Activated CD4-positive, alpha-beta memory T cell treated with anti-CD3 and anti-CD28 coated beads for 36 hours (primary cell): ENCODE measurements at regions of chr14 and their contacts with region 1.

Region 1: GRCh38 chr14:22556990-22557623 is 31.9 kb downstream of the DAD1 start:
- DNase-seq: peak; percentile 94
- H3K4me3 Mint-ChIP-seq: peak overlapping the region; percentile 78
- H3K27ac Mint-ChIP-seq: peak overlapping the region; percentile 99
- H3K4me1 Mint-ChIP-seq: peaks cover 87% of the 10 kb centered on the region
- H3K27me3 Mint-ChIP-seq: peaks cover 4% of the 10 kb centered on the region

Region 2: DNA sequence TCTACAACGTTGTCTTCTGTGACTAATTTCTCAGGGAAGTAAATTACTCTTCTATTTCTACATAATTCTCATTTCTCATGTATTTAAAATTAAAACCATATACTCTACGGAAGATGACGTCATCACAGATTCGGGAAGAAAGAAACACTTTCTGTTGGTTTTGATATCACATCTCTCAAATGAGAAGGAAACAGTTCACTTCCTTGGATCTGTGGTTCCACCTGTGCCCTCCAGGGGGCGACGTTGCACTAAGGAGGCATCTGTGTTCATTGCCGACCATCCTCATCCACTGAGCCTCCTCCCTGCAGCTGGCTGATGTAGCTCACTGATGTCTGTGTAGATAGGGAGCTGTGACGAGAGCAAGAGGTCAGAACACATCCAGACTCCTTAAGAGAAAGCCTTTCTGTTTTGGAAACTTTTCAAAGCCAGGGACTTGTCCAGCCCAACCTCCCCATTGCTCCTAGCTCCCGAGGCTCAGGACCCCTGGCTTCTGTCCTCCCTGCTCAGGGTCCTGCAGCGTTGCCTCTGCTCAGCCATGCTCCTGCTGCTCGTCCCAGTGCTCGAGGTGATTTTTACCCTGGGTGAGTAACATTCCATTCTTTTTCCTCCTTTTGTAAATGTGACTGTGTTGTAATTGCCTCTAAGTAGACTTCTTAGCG is 710.8 kb before region 1 on chr14:
- CTCF ChIA-PET with region 1: interaction called, 3 read pairs
- POLR2A ChIA-PET with region 1: interaction called, 7 read pairs
- intact Hi-C with region 1: loop called (anchors 2 kb)
- DNase-seq: peak; percentile 88
- H3K4me3 Mint-ChIP-seq: peak overlapping the region; percentile 84
- H3K27ac Mint-ChIP-seq: peak overlapping the region; percentile 90
- H3K4me1 Mint-ChIP-seq: peaks cover 9% of the 10 kb centered on the region
- H3K27me3 Mint-ChIP-seq: peaks cover 14% of the 10 kb centered on the region

Region 3: GRCh38 chr14:22047115-22047514 is 510.0 kb before region 1 on chr14:
- CTCF ChIA-PET with region 1: no interaction called
- POLR2A ChIA-PET with region 1: no interaction called
- intact Hi-C with region 1: loop called (anchors 5 kb)
- DNase-seq: peak; percentile 35
- H3K4me3 Mint-ChIP-seq: peak overlapping the region; percentile 45
- H3K27ac Mint-ChIP-seq: peak overlapping the region; percentile 76
- H3K4me1 Mint-ChIP-seq: peaks cover 30% of the 10 kb centered on the region
- H3K27me3 Mint-ChIP-seq: no peaks in the 10 kb centered on the region

Region 4: GRCh38 chr14:22460461-22461195 is 96.5 kb before region 1 on chr14:
- CTCF ChIA-PET with region 1: no interaction called
- POLR2A ChIA-PET with region 1: no interaction called
- intact Hi-C with region 1: no loop called
- DNase-seq: no peak
- H3K4me3 Mint-ChIP-seq: no peak overlapping the region
- H3K27ac Mint-ChIP-seq: no peak overlapping the region
- H3K4me1 Mint-ChIP-seq: no peaks in the 10 kb centered on the region
- H3K27me3 Mint-ChIP-seq: no peaks in the 10 kb centered on the region

Region 5: GRCh38 chr14:22491683-22492621 is 65.2 kb before region 1 on chr14:
- CTCF ChIA-PET with region 1: interaction called, 3 read pairs
- POLR2A ChIA-PET with region 1: interaction called, 25 read pairs
- intact Hi-C with region 1: no loop called
- DNase-seq: peak; percentile 56
- H3K4me3 Mint-ChIP-seq: peak overlapping the region; percentile 87
- H3K27ac Mint-ChIP-seq: peak overlapping the region; percentile 98
- H3K4me1 Mint-ChIP-seq: peaks cover 2% of the 10 kb centered on the region
- H3K27me3 Mint-ChIP-seq: no peaks in the 10 kb centered on the region

Region 6: GRCh38 chr14:22531451-22532344 is 25.4 kb before region 1 on chr14:
- CTCF ChIA-PET with region 1: interaction called, 28 read pairs
- POLR2A ChIA-PET with region 1: interaction called, 268 read pairs
- intact Hi-C with region 1: no loop called
- DNase-seq: peak; percentile 66
- H3K4me3 Mint-ChIP-seq: peak overlapping the region; percentile 74
- H3K27ac Mint-ChIP-seq: peak overlapping the region; percentile 99
- H3K4me1 Mint-ChIP-seq: peaks cover 88% of the 10 kb centered on the region
- H3K27me3 Mint-ChIP-seq: no peaks in the 10 kb centered on the region

Region 7: DNA sequence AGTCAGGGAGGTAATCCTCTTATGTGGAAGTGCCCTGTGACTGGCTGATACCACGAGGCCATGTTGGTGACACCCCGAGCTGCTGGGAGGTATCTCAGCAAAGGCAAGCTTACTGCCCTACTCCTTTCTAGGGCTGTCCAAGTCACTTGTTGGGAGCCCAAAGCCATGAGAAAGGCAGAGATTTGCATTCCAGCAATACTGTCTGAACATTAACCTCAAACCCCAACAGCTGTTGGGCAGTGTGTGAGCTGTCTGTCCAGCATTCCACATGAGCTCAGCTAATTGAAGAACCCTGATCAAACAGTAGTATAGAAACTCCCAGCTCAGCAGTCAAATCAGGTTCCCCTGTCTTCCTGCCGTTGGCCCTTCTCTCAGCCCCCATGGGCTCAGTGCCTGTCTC is 50.2 kb after region 1 on chr14:
- CTCF ChIA-PET with region 1: no interaction called
- POLR2A ChIA-PET with region 1: no interaction called
- intact Hi-C with region 1: no loop called
- DNase-seq: no peak
- H3K4me3 Mint-ChIP-seq: no peak overlapping the region
- H3K27ac Mint-ChIP-seq: no peak overlapping the region
- H3K4me1 Mint-ChIP-seq: no peaks in the 10 kb centered on the region
- H3K27me3 Mint-ChIP-seq: no peaks in the 10 kb centered on the region

Region 8: GRCh38 chr14:22766456-22767322 is 209.6 kb after region 1 on chr14 and contains the start of gene OXA1L:
- CTCF ChIA-PET with region 1: interaction called, 12 read pairs
- POLR2A ChIA-PET with region 1: interaction called, 6 read pairs
- intact Hi-C with region 1: no loop called
- DNase-seq: peak; percentile 98
- H3K4me3 Mint-ChIP-seq: peak within 1 kb of the TSS; percentile 94
- H3K27ac Mint-ChIP-seq: peak within 1 kb of the TSS; percentile 98
- H3K4me1 Mint-ChIP-seq: peaks cover 34% of the 10 kb centered on the region
- H3K27me3 Mint-ChIP-seq: peaks cover 2% of the 10 kb centered on the region
- total RNA-seq, gene OXA1L: 131 to 136 TPM

Region 9: DNA sequence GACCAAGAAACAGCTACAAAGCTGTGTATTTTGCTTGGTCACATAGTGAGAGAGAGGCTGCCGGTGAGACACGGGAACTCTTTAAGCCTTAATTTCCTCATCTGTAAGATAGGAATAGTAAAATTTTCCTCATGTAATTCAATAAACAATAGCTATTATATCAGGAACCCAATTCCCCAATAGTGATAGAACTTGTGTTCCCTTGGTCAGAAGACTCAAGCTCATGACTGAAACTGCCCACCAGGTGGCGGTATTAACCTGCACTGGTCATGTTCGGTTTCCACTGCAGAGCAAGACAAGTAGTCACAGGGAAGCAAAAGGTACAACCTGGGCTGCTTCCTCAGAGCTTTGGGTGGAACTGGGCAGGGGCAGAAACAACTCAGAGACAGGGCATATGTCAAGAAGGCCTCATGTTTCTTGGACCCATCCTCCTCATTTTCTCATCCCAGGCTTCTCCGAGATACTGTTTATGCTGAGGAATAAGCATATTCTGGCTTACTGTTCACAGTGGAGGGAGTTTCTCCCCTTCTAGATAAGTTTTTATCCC is 429.5 kb after region 1 on chr14:
- CTCF ChIA-PET with region 1: interaction called, 7 read pairs
- POLR2A ChIA-PET with region 1: no interaction called
- intact Hi-C with region 1: loop called (anchors 1 kb)
- DNase-seq: peak; percentile 92
- H3K4me3 Mint-ChIP-seq: no peak overlapping the region
- H3K27ac Mint-ChIP-seq: no peak overlapping the region
- H3K4me1 Mint-ChIP-seq: no peaks in the 10 kb centered on the region
- H3K27me3 Mint-ChIP-seq: no peaks in the 10 kb centered on the region